Activated CD4-positive, alpha-beta T cell treated with anti-CD3 and anti-CD28 coated beads for 36 hours (primary cell): ENCODE measurements at regions of chr9 and their contacts with region 1.

Region 1: DNA sequence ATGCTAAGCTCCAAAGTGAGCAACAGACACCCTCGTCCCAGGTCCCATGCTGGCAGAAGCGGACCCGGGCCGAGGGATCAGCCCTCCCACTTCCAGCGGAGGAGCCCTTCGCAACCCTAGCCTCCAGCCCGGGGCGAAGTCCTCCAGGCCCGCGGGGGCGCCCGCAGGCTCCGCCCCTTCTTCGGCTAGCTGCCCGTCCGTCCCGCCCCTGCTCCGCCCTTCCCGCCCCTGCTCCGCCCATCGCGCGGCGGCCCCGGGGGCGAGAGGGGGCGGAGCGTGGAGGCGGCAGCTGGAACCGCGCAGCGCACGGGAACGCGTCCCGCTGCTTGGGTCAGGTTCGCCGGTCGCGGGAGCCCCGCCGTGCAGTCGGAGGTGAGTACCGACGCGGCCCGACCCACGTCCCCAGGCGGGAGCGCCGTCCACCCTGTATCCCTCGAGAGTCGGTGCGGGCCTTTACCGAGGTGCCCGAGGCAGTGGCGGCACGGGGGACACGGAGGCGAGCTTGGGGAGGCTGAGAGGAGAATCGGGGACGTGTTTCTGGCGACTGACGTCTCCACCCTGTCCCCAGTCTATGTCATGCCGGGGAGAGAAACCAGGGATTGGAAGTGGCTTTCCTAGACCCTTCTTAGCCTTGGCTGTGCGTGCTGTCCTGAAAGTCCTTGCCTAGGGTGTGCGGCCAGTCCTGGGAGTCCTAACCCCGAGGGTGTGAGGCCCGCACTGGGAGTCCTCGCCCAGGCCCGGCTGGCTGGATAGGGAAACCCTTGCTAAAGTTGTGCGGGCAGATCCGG is at the start of gene ACO1:
- DNase-seq: peak; percentile 90
- ATAC-seq: peak; percentile 93
- H3K4me3 Mint-ChIP-seq: peak within 1 kb of the TSS; percentile 78
- H3K27ac Mint-ChIP-seq: peak within 1 kb of the TSS; percentile 16
- H3K4me1 Mint-ChIP-seq: peaks cover 12% of the 10 kb centered on the region
- H3K27me3 Mint-ChIP-seq: peaks cover 16% of the 10 kb centered on the region
- total RNA-seq, gene ACO1: 15.5 TPM

Region 2: GRCh38 chr9:32306006-32306405 is 78.6 kb before region 1 on chr9:
- CTCF ChIA-PET with region 1: no interaction called
- POLR2A ChIA-PET with region 1: no interaction called
- intact Hi-C with region 1: no loop called
- DNase-seq: no peak
- ATAC-seq: no peak
- H3K4me3 Mint-ChIP-seq: no peak overlapping the region
- H3K27ac Mint-ChIP-seq: no peak overlapping the region
- H3K4me1 Mint-ChIP-seq: no peaks in the 10 kb centered on the region
- H3K27me3 Mint-ChIP-seq: peaks cover 9% of the 10 kb centered on the region

Region 3: GRCh38 chr9:32419921-32420320 is 35.4 kb after region 1 on chr9:
- CTCF ChIA-PET with region 1: no interaction called
- POLR2A ChIA-PET with region 1: no interaction called
- intact Hi-C with region 1: loop called in 1 of 2 experiments (anchors 5 kb)
- DNase-seq: no peak
- ATAC-seq: no peak
- H3K4me3 Mint-ChIP-seq: no peak overlapping the region
- H3K27ac Mint-ChIP-seq: no peak overlapping the region
- H3K4me1 Mint-ChIP-seq: no peaks in the 10 kb centered on the region
- H3K27me3 Mint-ChIP-seq: no peaks in the 10 kb centered on the region

Region 4: GRCh38 chr9:32431940-32432555 is 47.5 kb after region 1 on chr9:
- CTCF ChIA-PET with region 1: interaction called, 52 read pairs
- POLR2A ChIA-PET with region 1: no interaction called
- intact Hi-C with region 1: loop called (anchors 1 kb)
- DNase-seq: peak; percentile 54
- ATAC-seq: no peak
- H3K4me3 Mint-ChIP-seq: no peak overlapping the region
- H3K27ac Mint-ChIP-seq: no peak overlapping the region
- H3K4me1 Mint-ChIP-seq: no peaks in the 10 kb centered on the region
- H3K27me3 Mint-ChIP-seq: no peaks in the 10 kb centered on the region

Region 5: DNA sequence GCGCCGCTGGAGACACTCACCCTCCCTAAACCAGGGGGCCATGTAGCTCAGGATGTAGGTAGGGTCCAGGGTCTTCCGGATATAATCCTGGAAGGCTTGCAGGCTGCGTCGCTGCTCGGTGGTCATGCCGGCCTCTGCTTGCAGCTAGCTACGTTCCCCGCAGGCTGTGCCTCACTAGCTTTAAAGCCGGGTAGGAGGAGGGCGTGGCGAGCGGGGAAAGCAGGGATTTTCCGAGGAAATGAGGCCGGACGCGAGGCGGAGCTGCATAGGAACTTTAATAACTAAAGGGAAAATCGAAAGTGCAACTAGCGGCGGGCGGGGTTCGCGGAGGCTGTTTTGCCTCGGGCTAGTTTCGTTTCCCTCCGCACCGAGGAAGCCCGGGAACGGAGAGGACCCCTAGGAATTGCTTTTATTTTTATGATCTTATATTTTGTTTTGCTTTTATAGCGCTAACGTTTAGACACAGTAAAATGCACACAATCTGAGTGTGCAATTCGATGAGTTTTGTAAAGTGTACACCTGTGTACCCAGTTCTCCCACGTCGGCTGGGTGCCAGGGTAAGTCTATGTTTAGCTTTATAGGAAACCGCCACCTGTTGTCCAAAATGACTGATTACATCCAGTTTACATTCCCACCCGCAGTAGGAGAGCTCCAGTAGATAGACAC is 141.6 kb after region 1 on chr9 and contains the start of gene RIGI:
- CTCF ChIA-PET with region 1: interaction called, 41 read pairs
- POLR2A ChIA-PET with region 1: interaction called, 3 read pairs
- intact Hi-C with region 1: loop called (anchors 1 kb)
- DNase-seq: peak; percentile 86
- ATAC-seq: peak; percentile 78
- H3K4me3 Mint-ChIP-seq: peak within 1 kb of the TSS; percentile 80
- H3K27ac Mint-ChIP-seq: peak within 1 kb of the TSS; percentile 90
- H3K4me1 Mint-ChIP-seq: peaks cover 41% of the 10 kb centered on the region
- H3K27me3 Mint-ChIP-seq: no peaks in the 10 kb centered on the region
- total RNA-seq, gene RIGI: 8.9 to 9.7 TPM

Region 6: DNA sequence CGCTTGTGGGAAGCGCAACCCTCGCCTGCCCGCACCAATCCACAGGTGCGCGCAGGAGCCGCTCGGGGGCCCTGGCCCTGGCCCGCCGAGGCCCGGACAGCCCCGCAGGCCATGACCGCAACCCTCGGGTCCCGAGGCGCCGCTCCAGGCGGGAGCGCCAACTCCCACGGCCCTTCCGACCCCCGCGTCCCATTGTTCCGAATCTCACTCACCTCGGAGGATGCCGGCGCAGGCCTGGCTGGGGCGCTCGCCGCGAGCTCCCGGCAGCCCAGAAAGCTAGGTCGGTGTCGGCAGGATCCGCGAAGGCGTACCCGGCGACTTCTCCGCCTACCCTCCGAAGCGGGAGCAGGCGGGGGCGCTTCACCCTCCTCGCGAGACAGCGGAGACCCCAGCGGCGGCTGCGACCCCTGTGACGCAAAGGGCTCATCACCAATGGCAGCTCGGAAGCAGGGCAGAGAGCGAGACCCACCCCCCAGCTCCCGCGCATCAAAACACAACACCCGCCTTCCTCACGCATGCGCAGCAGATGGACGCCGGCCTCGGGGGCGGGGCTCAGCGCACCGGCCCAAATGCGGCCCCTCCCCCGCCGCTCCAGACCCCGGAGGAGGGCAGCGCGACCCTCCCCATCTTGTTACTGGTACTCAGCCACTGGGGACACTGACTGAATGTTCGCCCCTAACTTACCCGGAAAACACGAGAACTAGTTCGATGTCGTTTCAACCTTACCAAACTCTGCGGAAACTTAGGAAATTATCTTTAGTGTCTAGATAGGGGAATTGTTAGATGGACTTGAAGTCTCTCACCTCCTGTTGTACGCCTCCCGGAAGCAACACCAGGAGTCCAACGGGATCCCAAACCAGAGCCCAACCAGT is 166.2 kb after region 1 on chr9:
- CTCF ChIA-PET with region 1: interaction called, 7 read pairs
- POLR2A ChIA-PET with region 1: interaction called, 3 read pairs
- intact Hi-C with region 1: loop called in 1 of 2 experiments (anchors 1 kb)
- DNase-seq: peak; percentile 95
- ATAC-seq: peak; percentile 74
- H3K4me3 Mint-ChIP-seq: peak overlapping the region; percentile 96
- H3K27ac Mint-ChIP-seq: peak overlapping the region; percentile 99
- H3K4me1 Mint-ChIP-seq: peaks cover 47% of the 10 kb centered on the region
- H3K27me3 Mint-ChIP-seq: no peaks in the 10 kb centered on the region

Region 7: DNA sequence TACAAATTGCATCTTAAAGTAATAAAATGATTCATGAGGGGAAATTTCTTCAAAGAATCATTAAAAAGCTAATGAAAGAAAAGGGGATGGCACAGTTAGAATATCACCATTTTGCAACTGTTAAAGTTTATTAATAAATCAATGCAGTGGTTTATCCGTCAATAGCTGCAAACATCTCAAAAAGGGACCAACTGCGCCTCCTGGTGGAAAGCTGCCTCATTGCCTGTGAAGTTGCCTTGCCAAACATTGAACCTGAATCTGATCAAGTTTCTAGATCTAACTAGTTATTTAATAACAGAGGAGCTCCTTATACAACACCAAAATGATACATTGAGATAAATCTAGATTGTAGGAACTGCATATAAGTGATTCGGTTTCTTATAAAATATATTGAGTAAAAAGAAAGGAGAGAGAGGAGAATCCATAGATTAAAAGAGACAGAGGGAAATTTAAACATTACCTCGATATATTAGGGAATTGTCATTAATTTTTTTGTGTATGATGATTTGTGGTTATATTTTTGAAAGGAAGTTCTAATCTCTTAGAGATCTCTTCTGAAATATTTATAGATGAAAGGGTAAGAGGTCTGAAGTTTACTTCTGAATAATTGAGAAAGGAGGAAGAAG is 195.3 kb after region 1 on chr9:
- CTCF ChIA-PET with region 1: interaction called, 530 read pairs
- POLR2A ChIA-PET with region 1: no interaction called
- intact Hi-C with region 1: loop called (anchors 1 kb)
- DNase-seq: peak; percentile 87
- ATAC-seq: no peak
- H3K4me3 Mint-ChIP-seq: no peak overlapping the region
- H3K27ac Mint-ChIP-seq: no peak overlapping the region
- H3K4me1 Mint-ChIP-seq: no peaks in the 10 kb centered on the region
- H3K27me3 Mint-ChIP-seq: peaks cover 8% of the 10 kb centered on the region